Activated CD8-positive, alpha-beta T cell treated with anti-CD3 and anti-CD28 coated beads, Interleukin-2, amount 10 ng/mL, durations not matched to agents 7 days and 5 days (primary cell): ENCODE measurements at regions of chr7 and their contacts with region 1.

Region 1: GRCh38 chr7:24572997-24573625 is at the start of gene PALS2:
- DNase-seq: peak; percentile 82
- ATAC-seq: peak; percentile 78
- H3K4me3 Mint-ChIP-seq: peak within 1 kb of the TSS; percentile 92
- H3K27ac Mint-ChIP-seq: peak within 1 kb of the TSS; percentile 82
- H3K4me1 Mint-ChIP-seq: peaks cover 28% of the 10 kb centered on the region
- H3K27me3 Mint-ChIP-seq: peaks cover 43% of the 10 kb centered on the region
- total RNA-seq, gene PALS2: 13.5 to 20.7 TPM

Region 2: GRCh38 chr7:24510759-24511158 is 62.4 kb before region 1 on chr7:
- CTCF ChIA-PET with region 1: no interaction called
- POLR2A ChIA-PET with region 1: no interaction called
- DNase-seq: no peak
- ATAC-seq: no peak
- H3K4me3 Mint-ChIP-seq: no peak overlapping the region
- H3K27ac Mint-ChIP-seq: no peak overlapping the region
- H3K4me1 Mint-ChIP-seq: no peaks in the 10 kb centered on the region
- H3K27me3 Mint-ChIP-seq: peaks cover 6% of the 10 kb centered on the region

Region 3: GRCh38 chr7:24587848-24588247 is 14.7 kb after region 1 on chr7:
- CTCF ChIA-PET with region 1: interaction called, 44 read pairs
- POLR2A ChIA-PET with region 1: interaction called, 4 read pairs
- DNase-seq: peak; percentile 68
- ATAC-seq: peak; percentile 82
- H3K4me3 Mint-ChIP-seq: no peak overlapping the region
- H3K27ac Mint-ChIP-seq: no peak overlapping the region
- H3K4me1 Mint-ChIP-seq: peaks cover 6% of the 10 kb centered on the region
- H3K27me3 Mint-ChIP-seq: no peaks in the 10 kb centered on the region

Region 4: DNA sequence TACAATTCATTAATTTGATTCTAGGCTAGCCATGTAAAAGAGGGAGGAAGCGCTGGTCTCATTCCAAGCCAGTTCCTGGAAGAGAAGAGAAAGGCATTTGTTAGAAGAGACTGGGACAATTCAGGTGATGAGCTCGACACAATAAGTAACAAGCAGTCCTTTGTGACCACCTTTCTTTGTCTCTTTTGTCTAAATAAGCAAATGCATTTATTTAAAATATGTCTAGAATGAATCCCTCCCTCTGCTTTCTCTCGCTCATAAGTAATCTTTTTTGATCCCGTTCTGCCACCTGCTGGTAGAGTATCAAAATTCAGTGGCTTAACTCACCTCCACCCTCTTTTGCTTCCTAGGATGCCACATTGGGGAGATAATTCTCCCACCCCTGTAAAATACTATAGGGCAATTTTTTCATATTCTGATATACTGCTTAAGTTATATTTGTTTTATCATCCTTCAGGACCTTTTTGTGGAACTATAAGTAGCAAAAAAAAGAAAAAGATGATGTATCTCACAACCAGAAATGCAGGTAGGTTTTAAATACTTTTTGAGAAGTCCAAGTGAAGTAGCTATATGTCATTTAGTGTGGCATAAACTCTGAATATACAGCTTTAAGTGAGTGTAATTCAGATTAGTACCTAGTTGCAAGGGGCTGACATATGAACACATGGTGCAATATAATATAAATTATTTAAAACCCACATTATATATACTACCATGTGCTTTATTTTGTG is 92.6 kb after region 1 on chr7:
- CTCF ChIA-PET with region 1: interaction called, 32 read pairs
- POLR2A ChIA-PET with region 1: no interaction called
- DNase-seq: peak; percentile 62
- ATAC-seq: no peak
- H3K4me3 Mint-ChIP-seq: no peak overlapping the region
- H3K27ac Mint-ChIP-seq: no peak overlapping the region
- H3K4me1 Mint-ChIP-seq: no peaks in the 10 kb centered on the region
- H3K27me3 Mint-ChIP-seq: no peaks in the 10 kb centered on the region

Region 5: GRCh38 chr7:24722386-24723177 is 149.5 kb after region 1 on chr7:
- CTCF ChIA-PET with region 1: no interaction called
- POLR2A ChIA-PET with region 1: no interaction called
- DNase-seq: no peak
- ATAC-seq: no peak
- H3K4me3 Mint-ChIP-seq: no peak overlapping the region
- H3K27ac Mint-ChIP-seq: no peak overlapping the region
- H3K4me1 Mint-ChIP-seq: peaks cover 22% of the 10 kb centered on the region
- H3K27me3 Mint-ChIP-seq: peaks cover 7% of the 10 kb centered on the region